ENCODE measurements at regions of chr7 and their contacts with region 1.

Region 1: GRCh38 chr7:99616359-99617191 is at the start of gene ZSCAN25:
- DNase-seq: peak; percentile 89 to 91
- ATAC-seq: peak; percentile 96 to 99 (median 98)
- H3K4me3 ChIP-seq: peak within 1 kb of the TSS; percentile 58 to 99 (median 86)
- H3K27ac ChIP-seq: peak within 1 kb of the TSS in 9 of 10 donors; percentile 70 to 92 (median 85)
- H3K4me1 ChIP-seq: peaks cover 5 to 20% (median 13%) of the 10 kb centered on the region in 9 donors
- H3K27me3 ChIP-seq: no peaks in the 10 kb centered on the region
- CTCF ChIP-seq: peak in 7 of 9 donors; percentile 22 to 55 (median 43)
- total RNA-seq, gene ZSCAN25: 6.1 to 10.5 (median 7.8) TPM

Region 2: DNA sequence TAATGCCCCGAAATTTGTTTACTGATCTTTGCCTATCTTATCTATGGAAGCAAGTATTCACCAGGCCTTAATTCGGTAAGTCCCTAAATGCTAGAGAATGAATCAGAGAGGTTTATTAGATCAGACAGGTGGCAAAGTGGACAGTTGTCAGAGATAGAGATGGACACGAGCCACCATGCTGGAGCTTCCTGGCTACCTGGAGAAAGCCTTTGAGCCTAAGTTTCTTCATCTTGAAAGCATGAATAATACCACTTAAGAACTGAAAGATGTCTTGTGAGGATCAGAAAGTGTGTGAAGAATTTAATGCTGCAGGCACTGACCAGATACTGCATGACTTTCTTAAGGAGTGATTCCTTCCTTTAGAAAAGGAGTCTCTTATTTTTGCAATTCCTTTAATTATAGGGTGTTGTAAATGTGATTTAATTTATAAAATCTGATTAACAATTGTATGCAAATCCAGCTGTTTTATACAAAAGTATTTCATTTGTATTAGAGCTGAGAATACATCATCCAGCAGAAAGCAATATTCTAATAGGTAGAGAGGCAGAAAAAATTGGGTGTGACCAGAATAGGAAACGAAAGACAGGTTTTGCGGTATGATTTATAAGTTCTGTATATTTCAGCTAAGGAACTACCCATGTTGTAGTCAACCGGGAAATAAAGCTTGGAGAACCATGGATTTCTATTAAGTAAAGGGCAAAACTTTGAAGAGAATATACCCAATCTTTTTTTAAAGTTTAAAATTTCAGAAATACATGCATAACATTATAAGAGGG is 555.4 kb before region 1 on chr7:
- intact Hi-C with region 1: no loop called
- DNase-seq: no peak
- ATAC-seq: no peak
- H3K4me3 ChIP-seq: no peak overlapping the region
- H3K27ac ChIP-seq: no peak overlapping the region
- H3K4me1 ChIP-seq: no peaks in the 10 kb centered on the region
- H3K27me3 ChIP-seq: no peaks in the 10 kb centered on the region
- CTCF ChIP-seq: no peak

Region 3: GRCh38 chr7:99472561-99473243 is 143.9 kb before region 1 on chr7 and contains the start of gene ZNF789:
- intact Hi-C with region 1: loop called in 1 of 10 experiments (anchors 5 kb)
- DNase-seq: peak; percentile 98
- ATAC-seq: peak; percentile 97 to 99 (median 99)
- H3K4me3 ChIP-seq: peak within 1 kb of the TSS; percentile 59 to 93 (median 72)
- H3K27ac ChIP-seq: peak within 1 kb of the TSS; percentile 57 to 88 (median 84)
- H3K4me1 ChIP-seq: peaks cover 0 to 35% (median 21%) of the 10 kb centered on the region in 9 donors
- H3K27me3 ChIP-seq: no peaks in the 10 kb centered on the region
- CTCF ChIP-seq: peak in 1 of 9 donors; percentile 11
- total RNA-seq, gene ZNF789: 1.7 to 5.6 (median 3.7) TPM

Region 4: DNA sequence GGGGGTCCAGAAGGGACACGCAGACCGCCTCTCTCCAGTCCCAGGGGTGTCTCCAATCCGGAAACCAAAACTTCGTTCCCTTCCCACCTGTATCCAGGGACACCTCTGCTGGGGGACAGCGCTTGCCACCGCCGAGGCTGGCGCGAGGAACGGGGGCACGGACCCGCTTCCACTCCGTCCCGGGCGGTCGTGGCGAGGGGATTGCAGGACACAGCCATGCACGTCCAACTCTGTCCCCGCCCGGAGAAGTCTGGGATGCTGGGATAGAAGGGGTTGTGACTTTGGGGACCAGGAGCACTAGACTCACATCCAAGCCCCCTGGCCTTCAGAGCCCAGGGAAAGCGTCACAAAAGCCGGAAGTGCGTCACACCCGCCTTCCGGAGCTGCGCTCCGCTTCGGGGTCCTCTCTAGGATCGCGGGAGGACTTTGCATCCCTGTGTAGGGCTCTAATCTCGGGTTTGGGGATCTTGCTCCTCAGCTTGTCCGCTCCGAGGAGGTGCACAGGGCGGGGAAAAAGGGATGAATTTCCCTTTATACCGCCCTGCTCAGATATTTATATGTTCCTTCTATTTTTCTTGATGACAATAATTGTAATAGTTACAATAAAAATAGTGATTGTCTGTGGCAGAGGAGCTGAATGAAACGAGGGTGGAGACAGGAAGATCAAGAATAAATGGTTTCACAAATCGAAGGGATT is 64.7 kb before region 1 on chr7 and contains the start of gene FAM200A:
- intact Hi-C with region 1: loop called in 2 of 10 experiments (anchors 5 kb)
- DNase-seq: peak; percentile 90 to 92
- ATAC-seq: peak; percentile 97 to 100 (median 99)
- H3K4me3 ChIP-seq: peak within 1 kb of the TSS; percentile 39 to 97 (median 87)
- H3K27ac ChIP-seq: peak within 1 kb of the TSS; percentile 6 to 96 (median 90)
- H3K4me1 ChIP-seq: peaks cover 0 to 29% (median 21%) of the 10 kb centered on the region in 9 donors
- H3K27me3 ChIP-seq: no peaks in the 10 kb centered on the region
- CTCF ChIP-seq: no peak
- total RNA-seq, gene FAM200A: 4.3 to 7.7 (median 5.6) TPM

Region 5: GRCh38 chr7:99558306-99559174 is 58.0 kb before region 1 on chr7 and contains the start of gene ZNF655:
- intact Hi-C with region 1: loop called in 2 of 10 experiments (anchors 5 kb)
- DNase-seq: peak; percentile 91 to 94
- ATAC-seq: peak; percentile 97 to 99 (median 97)
- H3K4me3 ChIP-seq: peak within 1 kb of the TSS; percentile 70 to 99 (median 86)
- H3K27ac ChIP-seq: peak within 1 kb of the TSS; percentile 77 to 99 (median 98)
- H3K4me1 ChIP-seq: peaks cover 4 to 57% (median 34%) of the 10 kb centered on the region in 9 donors
- H3K27me3 ChIP-seq: no peaks in the 10 kb centered on the region
- CTCF ChIP-seq: peak in 1 of 9 donors; percentile 21
- total RNA-seq, gene ZNF655: 27.2 to 37.6 (median 30.8) TPM

Region 6: DNA sequence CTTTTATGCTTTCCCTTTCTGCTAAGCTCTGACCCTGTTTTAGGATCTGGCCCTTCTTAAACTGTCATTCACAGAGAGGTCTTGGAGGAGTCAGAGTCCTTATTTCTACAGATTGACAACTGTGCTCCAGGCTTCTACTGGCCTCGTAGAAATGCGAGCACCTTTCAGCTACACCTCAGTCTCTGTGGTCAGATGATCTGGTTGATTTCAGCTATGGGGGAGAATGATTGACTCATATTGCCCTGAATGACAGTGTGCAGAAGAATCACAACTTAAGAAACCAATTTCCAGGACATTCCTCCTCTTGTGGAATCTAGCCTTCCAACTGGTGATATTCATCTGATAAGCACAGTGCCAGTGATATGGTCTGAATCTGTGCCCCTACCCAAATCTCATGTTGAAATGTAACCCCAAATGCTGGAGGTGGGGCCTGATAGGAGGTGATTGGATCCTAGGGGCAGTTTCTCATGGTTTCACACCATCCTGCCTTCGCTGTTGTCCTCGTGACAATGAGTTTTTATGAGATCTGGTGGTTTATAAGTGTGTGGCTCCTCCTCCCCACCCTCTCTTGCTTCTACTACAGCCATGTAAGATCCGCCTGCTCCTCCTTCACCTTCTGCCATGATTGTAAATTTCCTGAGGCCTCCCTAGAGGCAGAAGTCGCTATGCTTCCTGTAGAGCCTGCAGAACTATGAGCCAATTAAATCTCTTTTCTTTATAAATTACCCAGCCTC is 132.4 kb after region 1 on chr7:
- intact Hi-C with region 1: no loop called
- DNase-seq: no peak
- ATAC-seq: no peak
- H3K4me3 ChIP-seq: no peak overlapping the region
- H3K27ac ChIP-seq: no peak overlapping the region
- H3K4me1 ChIP-seq: no peaks in the 10 kb centered on the region
- H3K27me3 ChIP-seq: no peaks in the 10 kb centered on the region
- CTCF ChIP-seq: no peak

Region 7: DNA sequence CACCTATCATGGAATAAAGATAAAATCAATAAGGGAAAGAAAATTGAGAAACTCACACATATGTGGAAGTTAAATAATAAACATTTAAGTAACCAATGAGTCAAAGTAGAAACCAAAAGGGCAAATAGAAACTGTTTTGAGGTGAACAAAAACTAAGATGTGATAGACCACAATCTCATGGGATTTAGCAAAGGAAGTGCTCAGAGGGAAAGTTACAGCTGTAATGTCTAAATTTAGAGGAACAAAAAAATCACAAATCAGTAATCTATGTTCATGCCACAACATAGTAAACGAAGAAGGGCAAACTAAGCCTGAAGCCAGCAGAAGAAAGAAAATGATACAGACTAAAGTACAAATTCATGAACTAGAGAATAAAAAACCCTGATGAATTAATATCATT is 151.1 kb after region 1 on chr7:
- intact Hi-C with region 1: no loop called
- DNase-seq: no peak
- ATAC-seq: no peak
- H3K4me3 ChIP-seq: no peak overlapping the region
- H3K27ac ChIP-seq: no peak overlapping the region
- H3K4me1 ChIP-seq: peaks cover 0 to 3% (median 0%) of the 10 kb centered on the region in 9 donors
- H3K27me3 ChIP-seq: peaks cover 0 to 16% (median 0%) of the 10 kb centered on the region in 7 donors
- CTCF ChIP-seq: no peak

Measured in heart right ventricle (tissue), 16 donors.